IMR-90 (cell line): ENCODE measurements at regions of chr3 and their contacts with region 1.

Region 1: DNA sequence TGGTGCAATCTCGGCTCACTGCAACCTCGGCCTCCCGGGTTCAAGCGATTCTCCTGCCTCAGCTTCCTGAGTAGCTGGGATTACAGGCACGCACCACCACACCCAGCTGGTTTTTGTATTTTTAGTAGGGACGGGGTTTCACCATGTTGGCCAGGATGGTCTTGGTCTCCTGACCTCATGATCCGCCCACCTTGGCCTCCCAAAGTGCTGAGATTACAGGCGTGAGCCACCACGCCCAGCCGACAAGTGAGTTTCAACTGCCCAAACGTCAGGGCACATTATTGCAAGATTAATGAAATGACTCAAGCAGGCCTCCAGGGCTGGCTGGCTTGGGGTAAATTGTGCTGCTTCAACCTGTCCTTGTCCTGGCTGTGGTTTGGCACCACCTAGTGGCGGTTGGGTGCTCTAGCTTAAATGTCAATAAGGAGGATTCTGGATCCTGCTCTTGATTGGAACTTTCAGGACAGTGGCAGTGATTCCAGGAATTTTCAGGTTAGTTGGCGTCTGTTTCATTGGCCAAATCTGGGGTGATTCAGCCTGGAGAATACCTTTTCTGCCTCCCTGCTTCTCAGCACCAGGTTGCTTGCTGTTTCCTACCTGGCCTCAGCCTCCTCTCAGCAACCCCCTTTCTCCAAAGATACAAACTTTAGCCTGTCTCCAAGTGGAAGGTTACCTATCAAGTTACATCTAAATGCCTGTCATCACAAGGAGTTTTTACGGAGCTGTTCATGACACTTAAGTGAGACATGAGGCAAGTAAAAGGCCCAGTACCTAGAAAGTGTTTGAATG is 32.4 kb upstream of the SACM1L start:
- DNase-seq: peak; percentile 96
- ATAC-seq: peak; percentile 43
- H3K4me3 ChIP-seq: no peak overlapping the region
- H3K27ac ChIP-seq: no peak overlapping the region
- H3K4me1 ChIP-seq: peaks cover 28% of the 10 kb centered on the region
- H3K27me3 ChIP-seq: no peaks in the 10 kb centered on the region
- CTCF ChIP-seq: peak; percentile 96
- POLR2A ChIP-seq: peak; percentile 65
- RAD21 ChIP-seq: peak; percentile 99

Region 2: GRCh38 chr3:45037734-45038455 is 618.9 kb before region 1 on chr3:
- CTCF ChIA-PET with region 1: interaction called, 6 read pairs
- POLR2A ChIA-PET with region 1: no interaction called
- dilution Hi-C with region 1: no loop called
- in situ Hi-C with region 1: loop called (anchors 5 kb)
- intact Hi-C with region 1: loop called (anchors 1 kb)
- DNase-seq: peak; percentile 93
- ATAC-seq: peak; percentile 70
- H3K4me3 ChIP-seq: no peak overlapping the region
- H3K27ac ChIP-seq: no peak overlapping the region
- H3K4me1 ChIP-seq: peaks cover 20% of the 10 kb centered on the region
- H3K27me3 ChIP-seq: no peaks in the 10 kb centered on the region
- CTCF ChIP-seq: peak; percentile 98
- POLR2A ChIP-seq: 0 out of 2 replicates have a peak, but pooled peaks have one; percentile 44
- RAD21 ChIP-seq: peak; percentile 98

Region 3: GRCh38 chr3:45199837-45200648 is 456.7 kb before region 1 on chr3:
- CTCF ChIA-PET with region 1: no interaction called
- POLR2A ChIA-PET with region 1: no interaction called
- dilution Hi-C with region 1: no loop called
- in situ Hi-C with region 1: loop called (anchors 10 kb)
- intact Hi-C with region 1: no loop called
- DNase-seq: peak; percentile 92
- ATAC-seq: peak; percentile 84
- H3K4me3 ChIP-seq: no peak overlapping the region
- H3K27ac ChIP-seq: peak overlapping the region; percentile 59
- H3K4me1 ChIP-seq: peaks cover 20% of the 10 kb centered on the region
- H3K27me3 ChIP-seq: no peaks in the 10 kb centered on the region
- CTCF ChIP-seq: no peak
- POLR2A ChIP-seq: no peak
- RAD21 ChIP-seq: no peak

Region 4: GRCh38 chr3:45516829-45517228 is 139.9 kb before region 1 on chr3:
- CTCF ChIA-PET with region 1: interaction called, 16 read pairs
- POLR2A ChIA-PET with region 1: no interaction called
- dilution Hi-C with region 1: no loop called
- in situ Hi-C with region 1: loop called (anchors 5 kb)
- intact Hi-C with region 1: no loop called
- DNase-seq: peak; percentile 92
- ATAC-seq: peak; percentile 74
- H3K4me3 ChIP-seq: no peak overlapping the region
- H3K27ac ChIP-seq: no peak overlapping the region
- H3K4me1 ChIP-seq: peaks cover 12% of the 10 kb centered on the region
- H3K27me3 ChIP-seq: no peaks in the 10 kb centered on the region
- CTCF ChIP-seq: no peak
- POLR2A ChIP-seq: no peak
- RAD21 ChIP-seq: no peak

Region 5: GRCh38 chr3:45593708-45594609 is 62.8 kb before region 1 on chr3:
- CTCF ChIA-PET with region 1: interaction called, 6 read pairs
- POLR2A ChIA-PET with region 1: interaction called, 4 read pairs
- dilution Hi-C with region 1: no loop called
- in situ Hi-C with region 1: loop called (anchors 10 kb)
- intact Hi-C with region 1: loop called (anchors 1 kb)
- DNase-seq: peak; percentile 68
- ATAC-seq: peak; percentile 84
- H3K4me3 ChIP-seq: peak overlapping the region; percentile 77
- H3K27ac ChIP-seq: peak overlapping the region; percentile 83
- H3K4me1 ChIP-seq: peaks cover 28% of the 10 kb centered on the region
- H3K27me3 ChIP-seq: no peaks in the 10 kb centered on the region
- CTCF ChIP-seq: no peak
- POLR2A ChIP-seq: peak; percentile 58
- RAD21 ChIP-seq: no peak

Region 6: GRCh38 chr3:45618081-45618509 is 38.7 kb before region 1 on chr3:
- CTCF ChIA-PET with region 1: no interaction called
- POLR2A ChIA-PET with region 1: no interaction called
- dilution Hi-C with region 1: no loop called
- in situ Hi-C with region 1: no loop called
- intact Hi-C with region 1: loop called (anchors 1 kb)
- DNase-seq: peak; percentile 41
- ATAC-seq: peak; percentile 32; the same call in 1 of the 2 replicates
- H3K4me3 ChIP-seq: no peak overlapping the region
- H3K27ac ChIP-seq: no peak overlapping the region
- H3K4me1 ChIP-seq: peaks cover 11% of the 10 kb centered on the region
- H3K27me3 ChIP-seq: no peaks in the 10 kb centered on the region
- CTCF ChIP-seq: no peak
- POLR2A ChIP-seq: no peak
- RAD21 ChIP-seq: no peak

Region 7: DNA sequence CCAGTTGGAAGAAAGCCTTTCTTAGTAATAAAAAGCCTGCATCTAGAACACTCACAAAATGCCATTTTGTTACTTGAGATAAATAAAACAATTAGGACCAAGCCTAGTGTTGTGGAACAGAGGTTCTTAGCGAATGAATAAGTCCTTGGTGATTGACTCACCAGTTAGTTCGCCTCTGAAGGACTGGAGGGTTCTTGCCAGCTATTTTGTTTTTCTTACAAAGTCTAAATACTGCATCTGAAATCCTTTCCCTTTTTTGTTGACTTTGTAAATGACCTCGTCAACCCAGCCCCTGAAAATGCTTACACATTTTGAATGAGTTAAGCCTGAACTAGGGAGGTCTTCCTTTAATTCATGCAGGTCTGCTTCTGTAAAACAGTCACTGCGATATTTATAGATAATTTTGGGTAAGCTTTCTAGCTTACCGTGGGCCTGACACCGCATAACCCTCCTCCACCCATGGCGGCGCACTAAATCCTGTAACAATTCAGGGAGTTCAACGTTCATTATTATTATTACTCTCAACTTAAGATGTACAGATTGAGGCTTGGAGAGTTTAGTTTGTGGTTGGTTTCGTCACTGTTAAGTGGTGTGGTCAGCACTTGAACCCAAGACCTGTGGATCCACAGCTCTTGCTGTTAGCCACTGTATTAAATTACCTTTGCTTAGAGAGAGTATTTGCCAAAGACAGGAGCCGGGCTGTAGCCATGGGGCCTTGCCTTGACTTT is 12.5 kb before region 1 on chr3:
- CTCF ChIA-PET with region 1: interaction called, 10 read pairs
- POLR2A ChIA-PET with region 1: no interaction called
- dilution Hi-C with region 1: no loop called
- in situ Hi-C with region 1: no loop called
- intact Hi-C with region 1: no loop called
- DNase-seq: peak; percentile 95
- ATAC-seq: peak; percentile 59
- H3K4me3 ChIP-seq: no peak overlapping the region
- H3K27ac ChIP-seq: peak overlapping the region; percentile 97
- H3K4me1 ChIP-seq: peaks cover 53% of the 10 kb centered on the region
- H3K27me3 ChIP-seq: no peaks in the 10 kb centered on the region
- CTCF ChIP-seq: no peak
- POLR2A ChIP-seq: no peak
- RAD21 ChIP-seq: no peak